IMR-90 (cell line): ENCODE measurements at regions of chr12 and their contacts with region 1.

Region 1: DNA sequence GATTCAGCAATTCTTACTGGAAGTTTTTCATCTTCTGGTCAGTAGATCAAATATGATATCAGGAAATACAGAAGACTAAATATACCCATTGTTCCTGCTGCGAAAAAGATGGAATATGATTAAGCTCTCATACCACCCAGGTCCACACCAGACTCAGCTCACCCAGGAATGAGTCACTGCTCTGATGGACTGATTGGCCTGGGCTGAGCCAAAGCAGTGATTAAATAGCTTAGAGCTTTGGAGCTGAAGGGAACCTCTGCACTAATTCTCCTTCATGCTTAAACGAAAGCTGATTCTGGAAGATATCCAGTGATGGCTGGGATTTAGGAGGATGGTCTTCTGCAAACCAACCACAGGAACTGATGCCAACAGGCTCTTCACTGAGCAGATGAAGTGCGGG is 62.0 kb upstream of the SYT1 start:
- DNase-seq: peak; percentile 70
- ATAC-seq: peak; percentile 97
- H3K4me3 ChIP-seq: no peak overlapping the region
- H3K27ac ChIP-seq: no peak overlapping the region
- H3K4me1 ChIP-seq: no peaks in the 10 kb centered on the region
- H3K27me3 ChIP-seq: no peaks in the 10 kb centered on the region
- CTCF ChIP-seq: no peak
- POLR2A ChIP-seq: no peak
- RAD21 ChIP-seq: no peak

Region 2: DNA sequence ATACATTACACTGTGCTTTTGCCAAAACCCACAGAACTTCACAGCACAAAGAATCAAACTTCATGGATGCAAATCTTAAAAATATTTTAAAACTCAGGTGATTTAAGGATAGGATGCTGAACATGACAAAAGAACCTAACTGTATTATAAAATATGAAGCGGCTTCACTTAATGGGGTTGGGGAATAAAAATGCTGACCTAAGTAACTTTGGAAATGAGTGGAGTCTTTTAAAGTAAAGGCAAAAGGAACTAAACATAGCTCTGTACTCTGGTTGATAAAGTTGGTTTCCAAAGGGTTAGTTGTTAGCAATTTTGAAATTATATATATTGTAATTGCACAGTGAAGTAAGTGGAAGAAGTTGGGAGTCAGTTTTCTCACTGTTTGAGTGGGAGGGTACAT is 49.5 kb before region 1 on chr12:
- CTCF ChIA-PET with region 1: no interaction called
- POLR2A ChIA-PET with region 1: no interaction called
- dilution Hi-C with region 1: no loop called
- in situ Hi-C with region 1: no loop called
- intact Hi-C with region 1: loop called (anchors 5 kb)
- DNase-seq: no peak
- ATAC-seq: no peak
- H3K4me3 ChIP-seq: no peak overlapping the region
- H3K27ac ChIP-seq: no peak overlapping the region
- H3K4me1 ChIP-seq: no peaks in the 10 kb centered on the region; the same call in 1 of the 2 replicates
- H3K27me3 ChIP-seq: no peaks in the 10 kb centered on the region
- CTCF ChIP-seq: no peak
- POLR2A ChIP-seq: no peak
- RAD21 ChIP-seq: no peak

Region 3: DNA sequence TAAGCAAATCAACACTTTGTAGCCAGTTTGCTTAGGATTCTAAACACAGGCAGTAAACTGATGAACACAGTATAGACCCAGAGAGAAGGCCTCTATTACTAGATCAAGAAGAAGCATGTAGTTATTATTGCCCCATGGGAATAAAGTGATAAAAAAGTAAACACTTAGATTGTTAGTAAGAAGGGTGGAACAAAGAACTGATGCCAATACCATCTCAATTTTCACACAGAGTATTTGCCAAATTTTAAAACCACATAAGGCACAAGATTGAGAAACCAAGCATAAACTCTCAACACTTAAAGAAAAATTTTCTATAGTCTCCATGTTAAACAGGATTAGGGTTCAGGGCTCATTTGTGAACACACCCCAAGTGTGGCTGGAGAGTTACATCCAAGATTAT is 15.0 kb before region 1 on chr12:
- CTCF ChIA-PET with region 1: no interaction called
- POLR2A ChIA-PET with region 1: no interaction called
- dilution Hi-C with region 1: no loop called
- in situ Hi-C with region 1: no loop called
- intact Hi-C with region 1: no loop called
- DNase-seq: no peak
- ATAC-seq: no peak
- H3K4me3 ChIP-seq: no peak overlapping the region
- H3K27ac ChIP-seq: no peak overlapping the region
- H3K4me1 ChIP-seq: no peaks in the 10 kb centered on the region
- H3K27me3 ChIP-seq: no peaks in the 10 kb centered on the region
- CTCF ChIP-seq: no peak
- POLR2A ChIP-seq: no peak
- RAD21 ChIP-seq: no peak